ENCODE measurements at regions of chr1 and their contacts with region 1.

Region 1: DNA sequence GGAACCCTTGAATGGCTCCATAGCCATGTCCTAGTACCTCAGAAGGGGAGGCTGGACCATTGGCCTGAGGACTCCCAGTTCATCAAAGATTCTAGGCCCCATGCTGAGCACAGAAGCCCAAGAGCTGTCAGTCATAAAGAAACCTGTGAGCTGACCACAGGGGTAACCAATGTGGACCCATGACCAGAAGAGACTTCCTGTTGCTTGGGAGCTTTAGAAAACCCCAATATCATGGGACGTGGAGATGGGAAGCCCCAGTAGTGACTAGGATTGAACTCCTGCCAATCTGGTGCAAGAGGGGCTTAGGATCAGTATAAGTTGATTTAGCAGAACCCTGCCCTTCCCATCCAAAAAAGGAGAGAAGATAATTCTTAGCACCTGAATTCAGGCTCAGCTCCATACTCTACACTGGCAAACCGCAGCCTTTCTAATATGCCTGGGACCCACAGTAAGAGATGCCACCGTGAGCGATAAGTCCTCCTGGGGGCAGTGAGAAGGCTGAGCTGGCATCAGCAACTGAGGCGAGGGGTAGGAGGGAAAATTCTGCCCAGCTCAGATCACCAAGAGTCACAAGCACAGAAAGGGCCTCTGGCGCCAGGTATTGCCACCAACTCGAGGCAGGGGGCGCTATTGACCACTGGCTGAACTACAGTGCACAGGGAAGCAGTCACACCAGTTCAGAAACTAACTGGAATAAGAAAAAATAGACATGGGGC is 108.9 kb downstream of the CAPN8 start:
- DNase-seq: peak; percentile 49
- CTCF ChIP-seq: peak; percentile 49

Region 2: DNA sequence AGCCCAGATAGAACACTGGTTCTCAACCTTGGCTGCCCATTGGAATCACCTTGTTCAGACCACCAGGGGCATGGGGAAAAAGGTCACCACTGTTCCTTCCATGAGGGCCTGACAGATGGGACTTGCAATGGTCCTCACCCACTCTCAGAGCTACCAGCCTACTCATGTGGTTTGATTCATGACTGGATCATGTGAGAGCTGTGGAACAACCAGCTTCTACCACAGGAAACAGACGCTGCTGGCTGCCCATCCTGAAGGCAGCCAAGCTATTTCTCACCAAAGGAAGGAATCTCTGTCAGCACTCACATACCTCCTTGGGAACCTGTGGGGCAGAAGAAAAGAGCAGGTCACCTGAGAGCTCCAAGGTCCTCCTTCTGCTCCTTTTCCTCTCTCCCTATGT is 55.4 kb after region 1 on chr1:
- CTCF ChIA-PET with region 1: interaction called, 78 read pairs
- POLR2A ChIA-PET with region 1: no interaction called
- DNase-seq: no peak
- CTCF ChIP-seq: no peak

Region 3: GRCh38 chr1:223621312-223621734 is 64.8 kb after region 1 on chr1:
- CTCF ChIA-PET with region 1: interaction called, 78 read pairs
- POLR2A ChIA-PET with region 1: no interaction called
- DNase-seq: peak; percentile 58
- CTCF ChIP-seq: no peak

Region 4: DNA sequence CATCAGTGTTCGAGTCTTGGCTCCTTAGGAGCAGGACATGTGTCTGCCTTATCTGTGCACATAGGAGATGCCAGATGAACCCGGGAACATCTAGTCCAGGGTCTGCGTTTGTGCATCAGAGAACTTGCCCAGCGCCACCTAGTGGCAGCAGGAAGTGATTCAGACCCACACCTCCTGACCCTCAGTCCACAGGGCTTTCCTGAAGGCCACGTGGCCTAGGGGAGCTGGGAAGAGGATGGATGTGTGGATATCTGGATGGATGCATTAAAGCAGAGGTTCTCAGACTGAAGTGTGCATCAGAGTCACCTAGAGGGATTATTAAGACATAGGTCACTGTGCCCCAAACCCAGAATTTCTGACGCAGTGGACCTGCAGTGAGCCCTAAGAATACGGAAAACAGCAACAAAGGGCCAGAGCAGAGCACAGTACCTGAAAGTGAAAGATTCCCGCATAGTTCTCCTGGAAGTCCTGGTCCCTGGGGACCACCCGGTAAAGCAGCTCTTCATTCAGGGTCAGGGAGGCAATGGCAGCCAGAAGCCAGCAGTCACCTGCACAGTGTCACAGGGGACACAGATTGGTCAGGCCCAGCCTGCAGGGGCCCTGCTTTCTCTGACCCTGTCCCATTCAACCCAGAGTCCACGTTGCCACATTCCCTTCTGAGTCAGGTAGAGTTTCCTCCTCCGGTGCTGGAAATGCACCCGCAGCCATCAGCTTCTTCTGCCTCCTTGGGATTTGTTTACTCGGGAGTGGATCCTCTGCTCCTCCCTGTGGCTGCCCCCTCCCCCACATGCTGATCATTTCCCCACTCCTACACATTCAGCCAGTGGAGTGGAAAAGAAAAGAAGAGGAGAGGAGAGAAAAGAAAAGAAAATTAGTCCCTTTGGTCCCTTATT is 71.9 kb after region 1 on chr1:
- CTCF ChIA-PET with region 1: interaction called, 18 read pairs
- POLR2A ChIA-PET with region 1: no interaction called
- DNase-seq: peak; percentile 53
- CTCF ChIP-seq: peak; percentile 38

Region 5: DNA sequence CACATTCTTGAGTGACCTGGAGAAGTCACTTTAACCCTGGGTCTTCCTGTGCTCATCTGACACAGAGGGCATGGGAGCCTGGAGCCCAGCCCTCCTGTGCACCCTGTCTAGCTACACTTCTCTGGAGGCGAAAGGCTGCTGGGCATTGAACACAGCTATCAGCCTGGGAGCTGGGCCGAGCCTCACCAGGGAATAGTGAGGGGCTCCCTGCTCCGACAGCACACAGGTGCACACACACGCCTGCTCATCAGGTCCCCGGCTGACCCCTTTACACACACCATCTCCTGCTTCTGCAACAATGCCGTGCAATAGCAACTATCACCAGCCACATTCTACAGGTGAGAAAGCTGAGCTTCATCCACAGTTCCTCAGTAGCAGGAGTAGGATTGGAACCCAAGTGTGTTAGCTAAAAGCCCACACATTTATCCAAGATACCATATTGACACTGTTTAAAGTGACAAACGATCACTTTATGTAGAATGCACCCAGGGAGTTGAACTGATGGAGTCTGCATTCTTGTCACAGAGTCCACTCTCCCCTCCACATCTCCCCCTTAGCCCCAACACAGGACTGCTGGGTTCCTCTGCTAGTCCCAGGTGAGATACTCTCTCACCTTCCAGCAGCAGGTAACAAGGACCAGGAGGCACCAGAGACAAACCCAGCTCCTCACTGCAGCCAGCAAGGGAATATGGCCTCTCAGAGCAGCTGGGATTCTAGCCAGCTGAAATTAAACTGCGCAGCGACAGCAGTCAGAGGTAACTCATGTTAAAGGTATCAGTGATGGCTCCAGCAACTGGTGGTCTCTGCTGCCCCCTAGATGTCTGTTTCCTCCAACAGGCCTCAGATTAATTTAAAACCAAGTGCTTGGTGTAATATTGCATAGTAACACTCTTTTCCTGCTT is 127.3 kb after region 1 on chr1:
- CTCF ChIA-PET with region 1: interaction called, 20 read pairs
- POLR2A ChIA-PET with region 1: no interaction called
- DNase-seq: peak; percentile 31
- CTCF ChIP-seq: peak; percentile 53